ENCODE measurements at regions of chr1 and their contacts with region 1.

Region 1: GRCh38 chr1:92838519-92838918 is 6.7 kb downstream of the RPL5 start:
- DNase-seq: no peak
- ATAC-seq: no peak
- H3K4me3 Mint-ChIP-seq: no peak overlapping the region
- H3K27ac Mint-ChIP-seq: no peak overlapping the region
- H3K4me1 Mint-ChIP-seq: peaks cover 62% of the 10 kb centered on the region
- H3K27me3 Mint-ChIP-seq: no peaks in the 10 kb centered on the region
- CTCF ChIP-seq: no peak

Region 2: GRCh38 chr1:92851729-92852128 is 13.2 kb after region 1 on chr1:
- CTCF ChIA-PET with region 1: no interaction called
- POLR2A ChIA-PET with region 1: no interaction called
- intact Hi-C with region 1: loop called (anchors 2 kb)
- DNase-seq: no peak
- ATAC-seq: no peak
- H3K4me3 Mint-ChIP-seq: no peak overlapping the region
- H3K27ac Mint-ChIP-seq: no peak overlapping the region
- H3K4me1 Mint-ChIP-seq: peaks cover 14% of the 10 kb centered on the region
- H3K27me3 Mint-ChIP-seq: no peaks in the 10 kb centered on the region
- CTCF ChIP-seq: no peak

Measured in activated B cell treated with CpG ODN at 0.5 μM for 24 hours (primary cell).